ENCODE measurements at regions of chr18 and their contacts with region 1.

Region 1: GRCh38 chr18:38807915-38808314 is 1242.3 kb upstream of the CELF4 start:
- DNase-seq: no peak

Region 2: GRCh38 chr18:38081516-38081915 is 726.4 kb before region 1 on chr18:
- intact Hi-C with region 1: loop called in 1 of 2 experiments (anchors 5 kb)
- DNase-seq: no peak

Region 3: GRCh38 chr18:38826247-38826646 is 18.3 kb after region 1 on chr18:
- intact Hi-C with region 1: no loop called
- DNase-seq: no peak

Region 4: GRCh38 chr18:38868757-38869156 is 60.8 kb after region 1 on chr18:
- intact Hi-C with region 1: no loop called
- DNase-seq: no peak